ENCODE measurements at regions of chr9 and their contacts with region 1.

Region 1: DNA sequence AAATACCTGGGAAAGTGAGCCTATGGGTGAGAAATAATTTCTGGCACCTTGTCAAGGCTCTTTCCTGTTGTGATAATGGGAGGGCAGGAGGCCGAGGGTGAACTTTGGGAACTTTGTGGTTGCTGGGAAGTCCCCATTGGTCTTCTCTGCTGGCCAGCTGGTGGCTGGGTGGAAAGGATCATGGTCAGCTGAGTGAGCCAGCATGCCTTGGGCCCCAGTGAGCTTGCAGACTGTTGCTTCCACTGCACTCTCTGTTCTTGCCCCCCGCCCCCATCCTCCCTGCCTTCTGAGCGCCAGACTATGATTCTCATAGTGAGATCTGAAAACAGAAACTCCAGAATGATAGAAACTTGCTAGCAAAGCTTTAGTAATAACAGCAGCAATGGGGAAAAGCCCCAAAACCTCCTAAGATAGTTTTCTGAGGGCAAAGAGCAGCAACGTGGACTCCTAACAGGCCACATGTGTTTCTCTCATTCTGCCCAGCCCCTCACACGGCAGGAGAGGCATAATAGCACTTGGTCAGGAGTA is 139.2 kb upstream of the SMARCA2 start:
- DNase-seq: peak; percentile 91
- ATAC-seq: peak; percentile 74
- H3K4me3 Mint-ChIP-seq: no peak overlapping the region
- H3K27ac Mint-ChIP-seq: peak overlapping the region; percentile 86
- H3K4me1 Mint-ChIP-seq: peaks cover 28% of the 10 kb centered on the region
- H3K27me3 Mint-ChIP-seq: peaks cover 15% of the 10 kb centered on the region
- CTCF ChIP-seq: no peak

Region 2: DNA sequence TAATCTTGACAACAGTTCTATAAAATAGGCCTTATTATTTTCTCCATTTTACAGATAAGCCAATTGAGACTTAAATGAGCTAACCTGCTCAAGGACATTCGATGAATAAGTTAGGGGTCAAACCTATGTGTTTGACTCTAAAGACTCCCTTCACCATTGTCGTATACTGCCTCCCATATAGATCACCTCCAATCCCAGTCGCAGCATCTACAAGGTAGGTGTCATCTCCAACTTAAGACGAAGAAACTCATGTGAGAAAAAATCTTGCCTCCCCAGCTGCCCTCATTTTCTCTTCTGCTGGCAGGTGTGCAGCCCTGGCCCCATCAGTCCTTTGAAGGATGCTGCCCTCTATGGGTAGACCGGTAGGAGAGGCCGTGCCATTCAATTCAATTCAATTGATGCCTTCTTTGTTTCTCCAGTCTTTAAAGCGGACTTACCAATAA is 64.0 kb after region 1 on chr9:
- CTCF ChIA-PET with region 1: no interaction called
- POLR2A ChIA-PET with region 1: no interaction called
- intact Hi-C with region 1: loop called (anchors 5 kb)
- DNase-seq: peak; percentile 46
- ATAC-seq: peak; percentile 74
- H3K4me3 Mint-ChIP-seq: no peak overlapping the region
- H3K27ac Mint-ChIP-seq: no peak overlapping the region
- H3K4me1 Mint-ChIP-seq: no peaks in the 10 kb centered on the region
- H3K27me3 Mint-ChIP-seq: peaks cover 3% of the 10 kb centered on the region
- CTCF ChIP-seq: peak; percentile 76

Region 3: DNA sequence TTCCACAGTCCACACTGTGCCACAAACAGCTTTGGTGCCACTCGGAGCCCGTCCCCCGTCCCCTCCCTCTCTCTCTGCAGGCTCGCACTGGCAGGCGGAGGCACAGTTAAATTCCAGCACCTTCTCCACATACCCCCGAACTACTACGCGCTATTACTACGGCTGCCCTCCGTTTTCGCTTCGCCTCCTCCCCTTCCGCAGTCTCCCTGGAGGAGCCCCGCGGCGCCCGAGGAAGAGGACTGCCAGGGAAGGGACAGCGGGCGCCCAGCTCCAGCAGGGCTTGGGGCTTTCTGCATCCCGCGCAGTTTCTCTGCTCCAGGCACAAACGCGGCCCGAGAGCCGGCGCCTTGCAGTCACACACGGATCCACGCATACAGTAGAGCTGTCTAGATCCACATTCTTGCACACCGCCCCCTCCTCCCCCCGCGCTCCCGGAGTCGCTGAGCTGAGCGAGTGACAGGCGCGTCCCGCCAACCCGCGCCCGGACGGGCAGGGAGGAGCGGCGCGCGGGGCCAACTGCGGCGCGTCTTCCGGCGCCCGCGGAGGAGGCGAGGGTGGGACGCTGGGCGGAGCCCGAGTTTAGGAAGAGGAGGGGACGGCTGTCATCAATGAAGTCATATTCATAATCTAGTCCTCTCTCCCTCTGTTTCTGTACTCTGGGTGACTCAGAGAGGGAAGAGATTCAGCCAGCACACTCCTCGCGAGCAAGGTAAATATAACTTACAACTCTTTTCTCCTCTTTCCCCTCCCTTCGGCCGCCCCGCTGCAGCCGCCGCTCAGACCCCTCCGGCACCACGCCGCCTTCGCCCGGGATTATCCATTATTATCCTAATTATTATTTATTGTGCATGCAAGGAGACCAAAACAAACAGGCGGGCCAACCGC is 139.0 kb after region 1 on chr9 and contains the start of gene SMARCA2:
- CTCF ChIA-PET with region 1: interaction called, 3 read pairs
- POLR2A ChIA-PET with region 1: interaction called, 5 read pairs
- intact Hi-C with region 1: loop called (anchors 5 kb)
- DNase-seq: peak; percentile 98
- ATAC-seq: peak; percentile 88
- H3K4me3 Mint-ChIP-seq: peak within 1 kb of the TSS; percentile 89
- H3K27ac Mint-ChIP-seq: peak within 1 kb of the TSS; percentile 99
- H3K4me1 Mint-ChIP-seq: peaks cover 42% of the 10 kb centered on the region
- H3K27me3 Mint-ChIP-seq: no peaks in the 10 kb centered on the region
- CTCF ChIP-seq: no peak
- total RNA-seq, gene SMARCA2: 94.7 to 99.4 TPM

Region 4: DNA sequence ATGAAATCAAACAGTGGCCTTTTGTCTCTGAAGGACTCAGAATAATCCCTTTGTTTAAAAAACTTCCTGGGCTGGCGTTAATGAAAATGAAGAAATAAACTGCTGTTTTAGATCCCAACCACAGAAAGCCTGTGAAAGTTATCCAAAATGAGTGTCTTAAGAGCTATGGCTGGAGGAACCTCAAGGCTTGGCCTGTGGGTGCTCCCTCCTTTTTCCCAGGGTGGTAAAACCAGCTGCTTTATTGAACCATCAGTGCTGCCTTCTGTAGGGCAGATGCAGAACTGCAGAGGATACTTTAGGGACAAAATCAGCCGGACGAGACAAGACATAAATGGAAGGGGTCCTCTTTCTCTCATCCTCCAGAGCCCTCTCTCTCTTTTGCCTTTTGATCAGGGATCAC is 240.1 kb after region 1 on chr9:
- CTCF ChIA-PET with region 1: no interaction called
- POLR2A ChIA-PET with region 1: no interaction called
- intact Hi-C with region 1: no loop called
- DNase-seq: peak; percentile 24
- ATAC-seq: peak; percentile 45
- H3K4me3 Mint-ChIP-seq: no peak overlapping the region
- H3K27ac Mint-ChIP-seq: no peak overlapping the region
- H3K4me1 Mint-ChIP-seq: no peaks in the 10 kb centered on the region
- H3K27me3 Mint-ChIP-seq: no peaks in the 10 kb centered on the region
- CTCF ChIP-seq: peak; percentile 33